Activated B cell treated with CpG ODN at 0.5 μM for 24 hours (primary cell): ENCODE measurements at regions of chr3 and their contacts with region 1.

Region 1: DNA sequence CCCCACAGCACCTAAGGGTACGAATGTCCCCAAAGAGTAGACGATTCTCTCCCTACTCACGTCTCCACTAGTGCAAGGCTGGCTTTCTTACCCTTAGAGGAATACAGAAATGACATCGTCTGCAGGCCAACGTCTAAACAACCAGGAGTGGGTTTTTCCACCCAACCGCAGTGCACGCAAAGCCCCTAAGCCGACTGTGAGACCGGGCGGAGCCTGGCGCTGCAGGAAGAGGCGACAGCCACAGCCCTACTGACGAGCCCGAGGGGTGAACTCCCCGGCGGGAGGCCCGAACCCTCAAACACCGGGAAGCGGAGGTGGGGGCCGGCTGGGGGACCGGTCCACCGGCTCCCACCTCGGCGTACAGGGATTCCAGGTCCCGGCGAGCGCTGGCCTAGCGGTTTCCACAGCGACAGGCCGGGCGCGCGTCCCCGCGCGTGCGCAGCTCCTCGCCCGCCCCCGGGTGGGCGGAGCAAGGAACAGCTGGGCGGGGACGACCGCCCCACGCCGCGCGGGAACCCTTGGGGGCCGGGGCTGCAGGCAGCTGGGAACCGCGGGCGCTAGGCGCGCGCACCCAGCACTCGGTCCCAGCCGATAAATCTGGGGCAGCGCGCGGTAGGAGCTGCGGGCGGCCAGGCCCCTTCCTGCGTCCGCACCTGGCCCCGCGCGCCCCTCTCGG is at the starts of genes CEP19 and PIGX:
- DNase-seq: peak; percentile 96
- ATAC-seq: peak; percentile 80
- H3K4me3 Mint-ChIP-seq: peak within 1 kb of the TSS; percentile 91
- H3K27ac Mint-ChIP-seq: peak within 1 kb of the TSS; percentile 98
- H3K4me1 Mint-ChIP-seq: peaks cover 20% of the 10 kb centered on the region
- H3K27me3 Mint-ChIP-seq: no peaks in the 10 kb centered on the region
- CTCF ChIP-seq: no peak
- total RNA-seq, gene CEP19: 4.0 and 4.1 TPM in 2 replicates
- total RNA-seq, gene PIGX: 18.0 and 21.8 TPM in 2 replicates

Region 2: GRCh38 chr3:196632046-196632751 is 79.8 kb before region 1 on chr3:
- CTCF ChIA-PET with region 1: no interaction called
- POLR2A ChIA-PET with region 1: interaction called, 15 read pairs
- intact Hi-C with region 1: loop called (anchors 1 kb)
- DNase-seq: peak; percentile 77
- ATAC-seq: peak; percentile 75
- H3K4me3 Mint-ChIP-seq: peak overlapping the region; percentile 93
- H3K27ac Mint-ChIP-seq: peak overlapping the region; percentile 96
- H3K4me1 Mint-ChIP-seq: peaks cover 66% of the 10 kb centered on the region
- H3K27me3 Mint-ChIP-seq: no peaks in the 10 kb centered on the region
- CTCF ChIP-seq: no peak

Region 3: GRCh38 chr3:196684548-196685407 is 27.2 kb before region 1 on chr3:
- CTCF ChIA-PET with region 1: interaction called, 4 read pairs
- POLR2A ChIA-PET with region 1: interaction called, 8 read pairs
- intact Hi-C with region 1: loop called (anchors 1 kb)
- DNase-seq: peak; percentile 49
- ATAC-seq: peak; percentile 90
- H3K4me3 Mint-ChIP-seq: peak overlapping the region; percentile 66
- H3K27ac Mint-ChIP-seq: peak overlapping the region; percentile 60
- H3K4me1 Mint-ChIP-seq: peaks cover 30% of the 10 kb centered on the region
- H3K27me3 Mint-ChIP-seq: no peaks in the 10 kb centered on the region
- CTCF ChIP-seq: peak; percentile 81

Region 4: GRCh38 chr3:196694202-196694638 is 17.8 kb before region 1 on chr3:
- CTCF ChIA-PET with region 1: no interaction called
- POLR2A ChIA-PET with region 1: no interaction called
- intact Hi-C with region 1: loop called (anchors 1 kb)
- DNase-seq: no peak
- ATAC-seq: peak; percentile 35
- H3K4me3 Mint-ChIP-seq: no peak overlapping the region
- H3K27ac Mint-ChIP-seq: no peak overlapping the region
- H3K4me1 Mint-ChIP-seq: peaks cover 17% of the 10 kb centered on the region
- H3K27me3 Mint-ChIP-seq: no peaks in the 10 kb centered on the region
- CTCF ChIP-seq: no peak

Region 5: GRCh38 chr3:196739671-196740480 is 27.9 kb after region 1 on chr3 and contains the start of gene PAK2:
- CTCF ChIA-PET with region 1: no interaction called
- POLR2A ChIA-PET with region 1: interaction called, 44 read pairs
- intact Hi-C with region 1: loop called (anchors 1 kb)
- DNase-seq: peak; percentile 86
- ATAC-seq: peak; percentile 92
- H3K4me3 Mint-ChIP-seq: peak within 1 kb of the TSS; percentile 100
- H3K27ac Mint-ChIP-seq: peak within 1 kb of the TSS; percentile 99
- H3K4me1 Mint-ChIP-seq: peaks cover 33% of the 10 kb centered on the region
- H3K27me3 Mint-ChIP-seq: no peaks in the 10 kb centered on the region
- CTCF ChIP-seq: no peak
- total RNA-seq, gene PAK2: 73.7 and 87.1 TPM in 2 replicates